HCT116 (cell line): ENCODE measurements at regions of chr11 and their contacts with region 1.

Region 1: DNA sequence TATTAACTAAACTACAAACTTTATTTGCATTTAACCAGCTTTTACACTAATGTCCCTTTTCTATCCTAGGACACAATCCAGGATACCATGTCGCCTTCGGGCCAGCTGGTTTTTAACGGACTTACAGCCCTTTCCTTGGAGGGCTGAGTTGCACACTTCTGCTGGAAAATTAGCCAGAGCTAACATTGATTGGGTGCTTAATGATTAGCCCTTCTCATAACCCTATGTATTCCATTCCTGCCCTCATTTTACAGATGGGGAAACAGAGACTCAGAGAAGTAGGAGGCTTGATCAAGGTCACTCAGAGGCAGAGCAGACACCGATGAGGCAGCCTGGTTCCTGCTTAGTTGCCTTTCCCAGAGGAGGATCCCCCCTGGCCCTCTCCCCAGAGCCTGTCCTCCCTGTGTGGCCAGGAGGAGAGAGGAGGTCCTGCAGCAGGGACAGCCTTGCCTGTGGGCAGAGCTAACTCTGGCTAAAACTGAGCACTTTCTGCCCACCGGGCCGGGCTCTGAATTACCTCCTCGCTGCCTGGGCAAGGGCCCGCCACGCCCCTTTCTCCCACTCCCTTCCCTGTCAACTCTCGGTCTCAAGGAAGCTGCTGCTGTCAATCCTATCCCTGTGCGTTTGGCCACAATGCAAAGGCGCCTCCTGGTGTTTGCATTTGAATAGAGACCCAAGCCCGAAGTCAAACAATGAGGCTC is 59.6 kb upstream of the PAX6 start:
- DNase-seq: peak; percentile 48
- ATAC-seq: peak; percentile 87
- H3K4me3 ChIP-seq: no peak overlapping the region
- H3K27ac ChIP-seq: no peak overlapping the region
- H3K4me1 ChIP-seq: peaks cover 0 to 9% of the 10 kb centered on the region in 2 experiments; a peak in 2 of 4 replicates
- H3K27me3 ChIP-seq: no peaks in the 10 kb centered on the region
- CTCF ChIP-seq: peak; percentile 80 to 87 (median 81)
- POLR2A ChIP-seq: no peak
- RAD21 ChIP-seq: peak; percentile 93

Region 2: GRCh38 chr11:31240338-31240904 is 630.3 kb before region 1 on chr11:
- CTCF ChIA-PET with region 1: interaction called, 15 read pairs
- POLR2A ChIA-PET with region 1: no interaction called
- RAD21 ChIA-PET with region 1: no interaction called
- intact Hi-C with region 1: loop called (anchors 1 kb)
- DNase-seq: peak; percentile 59
- ATAC-seq: peak; percentile 80
- H3K4me3 ChIP-seq: no peak overlapping the region
- H3K27ac ChIP-seq: no peak overlapping the region
- H3K4me1 ChIP-seq: no peaks in the 10 kb centered on the region
- H3K27me3 ChIP-seq: no peaks in the 10 kb centered on the region
- CTCF ChIP-seq: peak; percentile 48 to 72 (median 62); a peak in 5 of 6 replicates
- POLR2A ChIP-seq: no peak
- RAD21 ChIP-seq: peak; percentile 72

Region 3: GRCh38 chr11:31340903-31341572 is 529.7 kb before region 1 on chr11:
- CTCF ChIA-PET with region 1: interaction called, 4 read pairs
- POLR2A ChIA-PET with region 1: no interaction called
- RAD21 ChIA-PET with region 1: no interaction called
- intact Hi-C with region 1: loop called (anchors 5 kb)
- DNase-seq: peak; percentile 26
- ATAC-seq: peak; percentile 75
- H3K4me3 ChIP-seq: no peak overlapping the region
- H3K27ac ChIP-seq: no peak overlapping the region
- H3K4me1 ChIP-seq: no peaks in the 10 kb centered on the region
- H3K27me3 ChIP-seq: no peaks in the 10 kb centered on the region
- CTCF ChIP-seq: peak; percentile 41 to 78 (median 75); a peak in 5 of 6 replicates
- POLR2A ChIP-seq: no peak
- RAD21 ChIP-seq: peak; percentile 30; the same call in 1 of the 2 replicates

Region 4: DNA sequence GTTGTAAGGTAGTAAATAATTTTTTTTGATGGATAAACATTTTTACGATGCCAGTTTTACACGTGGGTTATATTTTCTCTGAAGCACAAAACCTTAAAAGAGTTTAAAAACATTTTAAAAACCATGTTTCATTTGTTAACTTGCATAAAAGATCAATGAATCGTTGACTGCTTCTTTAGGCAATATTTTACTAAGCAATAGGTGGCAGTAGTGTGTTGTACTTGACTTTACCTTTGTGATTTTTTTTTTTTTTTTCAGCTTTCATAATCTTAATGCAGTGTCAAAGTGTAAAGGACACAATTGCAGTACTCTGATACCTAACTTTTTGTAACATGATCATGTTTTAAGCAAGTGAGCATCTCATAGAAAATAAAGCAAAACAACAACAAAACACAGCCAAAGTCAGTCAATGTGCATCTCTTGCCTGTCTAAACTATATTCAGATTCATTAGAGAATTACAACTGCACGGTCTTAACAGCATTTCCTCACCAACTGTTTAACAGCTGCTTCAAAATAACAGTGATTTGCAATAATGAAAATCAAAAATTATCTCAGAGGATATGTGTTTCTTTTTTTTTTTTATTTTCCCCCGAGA is 473.4 kb before region 1 on chr11:
- CTCF ChIA-PET with region 1: interaction called, 8 read pairs
- POLR2A ChIA-PET with region 1: no interaction called
- RAD21 ChIA-PET with region 1: no interaction called
- intact Hi-C with region 1: loop called (anchors 1 kb)
- DNase-seq: no peak
- ATAC-seq: no peak
- H3K4me3 ChIP-seq: no peak overlapping the region
- H3K27ac ChIP-seq: no peak overlapping the region
- H3K4me1 ChIP-seq: no peaks in the 10 kb centered on the region
- H3K27me3 ChIP-seq: no peaks in the 10 kb centered on the region
- CTCF ChIP-seq: peak; percentile 37 to 72 (median 51); a peak in 4 of 6 replicates
- POLR2A ChIP-seq: no peak
- RAD21 ChIP-seq: peak; percentile 59

Region 5: DNA sequence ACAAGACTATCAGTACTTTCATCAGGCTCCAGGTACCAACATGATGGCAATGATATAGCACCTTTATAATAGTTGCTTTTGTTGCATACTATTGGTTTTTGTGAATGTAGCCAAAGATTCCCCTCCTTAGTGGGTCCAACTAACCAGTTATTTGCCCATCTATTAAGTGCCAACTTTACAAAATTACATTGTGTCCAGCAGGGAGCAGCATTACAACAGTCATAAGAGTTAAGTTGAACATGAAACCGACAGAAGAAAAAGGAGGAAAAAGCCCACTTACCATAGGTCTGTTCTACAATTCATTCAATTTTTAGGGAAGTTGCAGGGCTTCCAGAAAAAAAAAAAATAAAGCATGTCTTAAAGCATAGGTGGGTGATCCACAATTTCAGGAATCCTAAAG is 382.9 kb before region 1 on chr11:
- CTCF ChIA-PET with region 1: interaction called, 7 read pairs
- POLR2A ChIA-PET with region 1: no interaction called
- RAD21 ChIA-PET with region 1: no interaction called
- intact Hi-C with region 1: loop called (anchors 1 kb)
- DNase-seq: peak; percentile 44
- ATAC-seq: peak; percentile 55
- H3K4me3 ChIP-seq: no peak overlapping the region
- H3K27ac ChIP-seq: no peak overlapping the region
- H3K4me1 ChIP-seq: no peaks in the 10 kb centered on the region
- H3K27me3 ChIP-seq: no peaks in the 10 kb centered on the region
- CTCF ChIP-seq: peak; percentile 39 to 63 (median 40); a peak in 5 of 6 replicates
- POLR2A ChIP-seq: no peak
- RAD21 ChIP-seq: peak; percentile 58

Region 6: GRCh38 chr11:31809857-31810778 is 60.6 kb before region 1 on chr11:
- CTCF ChIA-PET with region 1: no interaction called
- POLR2A ChIA-PET with region 1: no interaction called
- RAD21 ChIA-PET with region 1: no interaction called
- intact Hi-C with region 1: no loop called
- DNase-seq: no peak
- ATAC-seq: peak; percentile 78
- H3K4me3 ChIP-seq: peak overlapping the region; percentile 57 to 78
- H3K27ac ChIP-seq: peak overlapping the region; percentile 22; the same call in 1 of the 2 replicates
- H3K4me1 ChIP-seq: peaks cover 0 to 16% of the 10 kb centered on the region in 2 experiments; a peak in 2 of 4 replicates
- H3K27me3 ChIP-seq: no peaks in the 10 kb centered on the region
- CTCF ChIP-seq: no peak
- POLR2A ChIP-seq: no peak
- RAD21 ChIP-seq: no peak

Region 7: DNA sequence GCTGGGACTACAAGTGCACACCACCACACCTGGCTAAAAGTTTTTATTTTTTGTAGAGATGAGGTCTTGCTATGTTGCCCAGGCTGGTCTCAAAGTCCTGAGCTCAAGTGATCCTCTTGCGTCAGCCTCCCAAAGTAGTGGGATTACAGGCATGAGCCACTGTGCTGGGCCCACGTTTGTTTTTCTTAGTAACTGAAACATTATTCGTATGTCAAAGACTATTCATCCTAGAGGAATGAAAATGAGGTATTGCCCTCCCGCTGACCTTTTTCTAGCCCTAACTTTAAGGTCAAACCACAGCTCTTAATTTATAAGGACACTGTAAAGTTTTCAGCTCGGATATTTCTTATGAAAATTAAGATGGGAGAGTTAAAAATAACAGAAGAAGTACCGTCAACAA is 26.4 kb before region 1 on chr11:
- CTCF ChIA-PET with region 1: no interaction called
- POLR2A ChIA-PET with region 1: no interaction called
- RAD21 ChIA-PET with region 1: no interaction called
- intact Hi-C with region 1: no loop called
- DNase-seq: no peak
- ATAC-seq: no peak
- H3K4me3 ChIP-seq: no peak overlapping the region
- H3K27ac ChIP-seq: no peak overlapping the region
- H3K4me1 ChIP-seq: no peaks in the 10 kb centered on the region
- H3K27me3 ChIP-seq: 0 out of 2 replicates have a peak, but pooled peaks cover 3% of the 10 kb centered on the region
- CTCF ChIP-seq: no peak
- POLR2A ChIP-seq: no peak
- RAD21 ChIP-seq: no peak